Posterior vena cava (tissue), 2 donors: ENCODE measurements at regions of chr22 and their contacts with region 1.

Region 1: DNA sequence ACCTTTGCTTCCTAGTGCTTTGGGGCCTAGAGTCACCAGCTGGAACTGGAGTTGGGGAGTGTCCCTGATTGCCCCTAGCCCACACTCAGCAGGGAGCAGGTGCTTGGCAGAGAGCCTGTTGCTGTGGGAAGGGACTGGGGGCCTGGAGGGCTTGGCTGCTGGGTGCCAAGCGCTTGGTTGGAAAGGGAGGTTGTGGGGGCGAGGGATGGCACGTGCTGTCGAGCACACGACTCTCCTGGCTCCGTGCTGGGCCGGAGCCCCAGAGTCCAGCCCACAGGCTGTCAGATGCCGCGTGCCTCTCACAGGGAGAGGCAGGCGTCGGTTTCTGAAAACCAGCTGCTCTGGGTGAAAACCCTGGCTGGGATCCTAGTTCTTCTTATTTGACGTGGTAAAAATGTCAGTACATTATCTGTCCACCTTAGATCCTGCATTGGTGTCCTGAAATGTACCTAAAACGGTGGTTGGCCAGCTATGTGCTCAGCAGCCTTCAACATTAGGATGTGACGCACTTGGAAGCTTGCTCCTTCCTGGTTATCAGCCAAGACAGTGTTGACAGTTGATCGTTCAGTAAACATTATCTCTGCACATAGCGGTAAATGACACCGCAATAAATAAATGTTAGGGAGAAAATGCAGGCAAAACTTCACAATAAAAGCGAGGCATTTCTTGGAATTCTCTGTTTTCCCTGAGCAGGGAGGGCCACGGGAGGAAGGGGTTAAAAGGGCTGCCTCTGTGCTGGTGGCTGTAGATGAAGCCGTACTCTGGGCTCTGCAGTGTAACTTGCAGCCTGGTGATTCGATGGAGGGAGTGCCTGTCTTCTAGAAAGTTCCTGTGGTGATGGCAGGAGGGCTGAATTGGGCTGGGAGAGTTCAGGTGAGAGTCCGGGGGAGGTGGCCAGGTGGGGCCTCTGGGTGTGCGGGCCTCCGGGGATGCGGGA is 29.2 kb downstream of the GRAMD4 start:
- DNase-seq: no peak

Region 2: GRCh38 chr22:46563381-46564083 is 85.9 kb before region 1 on chr22:
- intact Hi-C with region 1: loop called in 1 of 2 experiments (anchors 10 kb)
- DNase-seq: peak; percentile 93

Region 3: DNA sequence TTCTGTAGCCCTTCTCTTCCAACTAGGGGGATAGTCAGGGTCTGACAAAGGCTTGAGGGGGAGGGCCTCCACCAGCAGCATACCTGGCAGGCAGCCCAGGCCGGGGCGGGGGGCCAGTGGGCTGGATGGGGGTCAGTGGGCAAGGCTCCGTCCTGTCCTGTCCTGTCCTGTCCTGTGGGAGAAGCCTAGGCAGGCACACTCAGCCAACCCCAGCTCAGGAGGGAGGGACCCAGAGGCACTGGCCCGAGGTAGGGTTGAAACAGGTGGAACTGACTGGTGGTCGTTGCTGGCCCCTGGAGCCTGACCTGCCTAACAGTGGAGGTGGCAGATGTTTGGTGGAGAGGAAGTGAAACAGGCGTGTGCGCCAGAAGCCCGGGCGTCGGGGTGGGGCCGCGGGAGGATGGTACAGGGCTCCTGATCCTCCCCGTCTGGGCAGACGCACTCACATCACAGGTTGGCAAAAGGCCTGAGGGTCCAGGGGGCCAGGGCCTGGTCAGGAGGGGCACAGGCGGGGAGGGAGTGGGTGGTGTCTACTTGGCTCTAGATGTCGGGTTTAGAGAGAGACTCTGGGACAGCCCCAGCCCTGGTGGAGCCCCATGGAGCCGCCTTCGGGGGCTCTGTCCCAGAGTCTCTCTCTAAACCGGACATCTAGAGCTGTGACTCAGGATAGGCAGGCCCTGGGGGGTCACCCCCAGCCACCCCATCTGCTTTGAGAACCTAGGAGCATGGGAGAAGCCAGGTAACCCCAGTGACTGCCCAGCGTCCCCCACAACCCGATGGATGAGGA is 61.7 kb before region 1 on chr22:
- intact Hi-C with region 1: no loop called
- DNase-seq: no peak

Region 4: GRCh38 chr22:46674367-46674781 is 25.0 kb after region 1 on chr22:
- intact Hi-C with region 1: no loop called
- DNase-seq: peak; percentile 92